Cardiac septum (tissue), 1 donor: ENCODE measurements at regions of chr11 and their contacts with region 1.

Region 1: GRCh38 chr11:12862696-12863469 is 146.2 kb upstream of the RASSF10 start:
- DNase-seq: no peak

Region 2: DNA sequence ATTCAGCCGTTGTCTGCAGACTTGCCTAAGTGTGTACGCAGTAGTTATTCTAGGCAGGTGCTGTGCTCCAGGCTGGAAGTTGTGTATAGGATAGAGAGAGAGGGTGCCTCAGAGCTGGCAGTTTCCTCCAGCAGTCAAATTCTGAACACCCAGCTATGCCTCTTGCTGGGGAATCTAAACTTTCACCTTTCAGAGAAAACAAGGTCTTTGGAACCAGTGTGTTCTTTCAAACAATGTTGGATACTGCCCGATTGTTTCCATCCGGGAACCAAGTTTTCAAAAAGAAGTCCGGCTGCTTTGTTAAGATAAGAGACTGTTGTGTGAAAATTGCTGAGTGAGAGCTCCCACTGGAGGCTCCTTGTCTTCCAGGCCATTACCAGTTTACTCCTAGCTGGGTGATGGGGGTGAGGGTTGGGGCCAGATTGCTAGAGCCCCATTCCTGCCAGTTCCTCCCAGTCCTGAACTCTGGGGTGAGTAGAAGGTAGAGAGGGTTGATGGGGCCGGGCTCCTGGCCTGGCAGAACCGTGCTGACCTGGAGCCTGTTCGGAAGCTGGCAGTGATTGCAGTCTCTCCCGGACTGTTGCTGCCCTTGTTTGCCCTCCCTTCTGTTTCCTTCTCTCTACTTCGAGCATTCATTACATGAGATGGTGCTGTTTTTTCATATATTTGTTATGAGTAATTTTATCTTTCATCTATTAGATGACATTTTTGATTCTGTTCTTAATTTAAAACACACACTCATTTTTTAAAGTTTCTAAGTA is 38.4 kb before region 1 on chr11:
- intact Hi-C with region 1: loop called (anchors 5 kb)
- DNase-seq: no peak